Tibial artery (tissue), 4 donors: ENCODE measurements at regions of chr4 and their contacts with region 1.

Region 1: DNA sequence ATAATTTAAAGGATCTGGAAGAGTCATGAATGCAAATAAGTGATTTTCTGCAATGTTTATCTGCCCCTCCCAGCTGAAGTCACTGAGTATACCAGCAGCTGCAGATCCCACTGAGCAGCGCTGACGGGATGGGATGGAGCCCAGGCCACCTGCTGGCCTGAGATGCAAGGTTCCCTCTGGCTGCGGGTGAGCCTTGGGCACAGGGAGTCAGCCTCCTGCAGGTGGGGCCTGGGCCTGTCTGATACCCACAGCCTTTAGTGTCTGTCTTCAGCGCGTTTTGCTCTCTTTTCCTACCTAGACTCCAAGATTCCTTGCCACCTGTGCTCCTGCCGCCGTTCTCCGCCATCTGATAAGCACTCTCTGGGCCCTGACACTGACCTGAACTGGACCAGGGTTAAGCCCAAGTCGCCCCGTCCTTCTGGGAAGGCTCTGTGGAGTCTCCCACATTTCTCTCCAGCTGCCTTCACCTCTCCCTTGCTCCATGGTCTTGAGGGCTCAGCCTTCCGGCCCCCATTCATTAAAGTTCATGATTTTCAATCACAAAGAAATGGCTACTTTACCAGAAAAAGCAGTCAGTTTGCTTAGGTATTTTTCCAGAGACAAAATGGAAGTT is 223.1 kb upstream of the FAT1 start:
- DNase-seq: no peak
- H3K4me3 ChIP-seq: no peak overlapping the region
- H3K27ac ChIP-seq: no peak overlapping the region
- H3K4me1 ChIP-seq: peaks cover 0 to 18% (median 3%) of the 10 kb centered on the region in 4 donors
- H3K27me3 ChIP-seq: no peaks in the 10 kb centered on the region
- CTCF ChIP-seq: no peak

Region 2: GRCh38 chr4:186739802-186740434 is 206.9 kb before region 1 on chr4:
- intact Hi-C with region 1: loop called (anchors 10 kb)
- DNase-seq: no peak
- H3K4me3 ChIP-seq: no peak overlapping the region
- H3K27ac ChIP-seq: no peak overlapping the region
- H3K4me1 ChIP-seq: peaks cover 0 to 7% (median 3%) of the 10 kb centered on the region in 4 donors
- H3K27me3 ChIP-seq: no peaks in the 10 kb centered on the region
- CTCF ChIP-seq: no peak

Region 3: DNA sequence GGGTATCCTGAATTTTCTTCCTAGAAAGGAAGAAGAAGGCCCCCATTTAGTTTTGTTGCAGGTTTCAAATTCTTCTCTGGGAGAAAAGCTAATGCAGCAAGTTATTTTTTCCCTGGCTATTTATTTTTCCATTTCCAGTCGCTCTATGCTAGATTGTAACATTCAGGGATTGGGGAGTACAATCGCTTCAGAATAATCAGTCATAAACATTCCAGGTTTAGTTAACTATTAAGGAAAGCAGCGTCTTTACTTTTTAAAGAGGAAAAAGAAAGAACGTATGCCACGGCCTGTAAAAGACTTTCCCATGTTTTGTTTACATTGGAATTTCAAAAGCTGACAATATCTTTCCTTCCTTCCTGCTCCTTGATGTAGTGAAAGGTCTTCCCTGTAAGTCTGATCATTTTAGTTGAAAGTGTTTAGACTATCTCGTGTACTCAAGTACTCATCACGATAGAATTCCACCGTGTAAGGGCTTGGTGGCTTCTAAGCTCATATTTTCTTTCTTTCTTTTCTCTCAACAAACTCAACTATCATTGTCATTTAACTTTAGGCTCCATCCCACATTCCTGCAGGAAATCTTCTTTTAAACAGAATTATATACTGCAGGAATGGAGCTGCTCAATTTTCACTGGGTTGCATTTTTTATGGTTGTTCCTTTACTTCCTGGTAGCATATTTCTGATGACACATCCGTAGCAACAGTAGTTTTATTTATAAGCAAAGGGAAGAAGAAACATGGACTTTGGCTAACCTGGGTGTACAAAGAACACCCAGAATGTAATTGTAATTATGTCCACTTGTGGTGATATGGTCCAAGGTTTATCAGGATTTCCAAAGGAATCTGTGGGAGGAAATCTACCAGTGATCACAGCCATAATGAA is 10.1 kb before region 1 on chr4:
- intact Hi-C with region 1: no loop called
- DNase-seq: no peak
- H3K4me3 ChIP-seq: peak overlapping the region; percentile 16 to 20
- H3K27ac ChIP-seq: peak overlapping the region; percentile 47 to 59
- H3K4me1 ChIP-seq: peaks cover 0 to 28% (median 0%) of the 10 kb centered on the region in 4 donors
- H3K27me3 ChIP-seq: no peaks in the 10 kb centered on the region
- CTCF ChIP-seq: peak; percentile 16 to 29